Heart left ventricle (tissue), 16 donors: ENCODE measurements at regions of chr6 and their contacts with region 1.

Region 1: DNA sequence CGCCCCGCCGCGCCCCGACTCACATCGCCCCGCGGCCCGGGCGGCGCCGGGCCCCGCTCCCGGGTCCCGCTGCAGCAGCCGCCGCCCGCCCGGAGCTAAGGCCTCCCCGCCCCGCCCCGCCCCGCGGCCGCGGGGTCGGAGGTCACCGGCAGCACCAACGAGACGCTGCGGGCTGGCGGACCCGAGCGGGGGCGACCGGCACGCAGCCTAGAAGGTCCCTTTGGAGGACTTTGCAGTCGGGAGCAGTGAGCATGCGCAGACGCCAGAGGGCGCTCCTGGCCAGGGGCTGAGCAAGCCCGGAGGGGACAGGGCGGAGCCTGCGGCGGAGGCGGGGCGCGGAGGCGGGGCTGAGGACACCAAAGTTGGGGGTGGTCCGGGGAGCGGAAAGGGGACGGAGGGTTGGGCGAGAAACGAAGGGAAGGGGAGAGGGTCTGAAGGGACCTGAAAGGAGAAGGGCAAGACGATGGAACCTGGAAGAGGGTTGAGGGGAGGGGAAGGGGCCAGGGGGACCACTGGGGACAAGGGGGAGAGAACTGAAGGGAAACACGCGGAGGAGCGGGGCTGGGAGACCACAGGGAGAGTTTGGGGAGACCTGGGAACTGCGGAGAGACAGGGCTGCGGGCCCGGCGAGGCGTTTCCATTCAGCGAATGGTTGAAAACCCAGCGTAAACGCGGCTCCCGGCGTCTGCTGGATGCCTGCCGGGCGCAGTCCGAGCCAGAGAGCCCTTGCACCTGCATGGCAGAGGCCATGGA is at the start of gene FRS3:
- DNase-seq: peak; percentile 98 to 100 (median 99)
- ATAC-seq: peak; percentile 92 to 95 (median 94)
- H3K4me3 ChIP-seq: peak within 1 kb of the TSS; percentile 61 to 96 (median 79)
- H3K27ac ChIP-seq: peak within 1 kb of the TSS; percentile 76 to 97 (median 91)
- H3K4me1 ChIP-seq: peaks cover 3 to 56% (median 26%) of the 10 kb centered on the region in 12 donors
- H3K27me3 ChIP-seq: no peaks in the 10 kb centered on the region
- CTCF ChIP-seq: peak; percentile 84 to 97 (median 91)
- POLR2A ChIP-seq: peak in 1 of 2 donors; percentile 36
- total RNA-seq, gene FRS3: 3.8 to 6.8 (median 5.1) TPM

Region 2: DNA sequence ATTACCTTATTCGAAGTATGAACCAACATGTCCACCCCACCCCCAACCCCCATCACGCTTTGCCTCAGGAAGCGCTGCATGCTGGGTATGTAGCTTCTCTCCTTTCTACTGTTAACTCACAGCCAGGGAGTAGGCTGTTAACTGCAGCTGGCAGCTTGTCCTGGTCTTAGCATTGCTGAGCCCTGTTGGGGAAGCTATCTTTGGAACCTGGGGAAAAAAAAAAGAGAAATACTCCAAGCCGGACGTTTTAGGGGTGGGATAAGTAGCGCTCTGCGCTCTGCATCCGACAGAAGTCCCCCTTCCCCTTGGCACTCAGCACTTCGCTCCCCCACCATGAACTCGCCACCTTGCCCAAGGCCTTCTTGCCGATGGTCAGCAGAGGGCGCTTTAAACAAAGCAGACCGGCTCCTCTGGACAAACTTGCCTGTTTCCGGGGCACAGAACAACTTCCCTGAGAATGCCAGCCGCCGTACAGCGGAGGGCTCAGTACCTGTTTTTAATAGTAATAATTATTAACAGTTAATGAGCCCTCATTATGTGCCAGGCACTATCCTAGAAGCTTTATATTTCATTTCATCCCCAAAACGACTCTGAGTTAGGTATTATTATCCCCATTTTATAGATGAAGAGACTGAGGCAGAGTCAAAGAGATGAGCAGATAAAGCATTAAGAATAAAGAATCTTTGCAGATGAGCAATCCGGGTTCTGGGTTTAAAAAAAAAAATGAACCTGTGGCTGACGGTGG is 176.9 kb before region 1 on chr6:
- intact Hi-C with region 1: loop called in 7 of 10 experiments (anchors 2 to 10 kb)
- DNase-seq: peak; percentile 84 to 88 (median 84)
- ATAC-seq: peak; percentile 62 to 87 (median 81)
- H3K4me3 ChIP-seq: peak overlapping the region in 9 of 12 donors; percentile 2 to 40 (median 17)
- H3K27ac ChIP-seq: peak overlapping the region in 3 of 12 donors; percentile 5 to 52 (median 51)
- H3K4me1 ChIP-seq: peaks cover 0 to 11% (median 3%) of the 10 kb centered on the region in 12 donors
- H3K27me3 ChIP-seq: no peaks in the 10 kb centered on the region
- CTCF ChIP-seq: peak; percentile 77 to 96 (median 90)
- POLR2A ChIP-seq: no peak

Region 3: DNA sequence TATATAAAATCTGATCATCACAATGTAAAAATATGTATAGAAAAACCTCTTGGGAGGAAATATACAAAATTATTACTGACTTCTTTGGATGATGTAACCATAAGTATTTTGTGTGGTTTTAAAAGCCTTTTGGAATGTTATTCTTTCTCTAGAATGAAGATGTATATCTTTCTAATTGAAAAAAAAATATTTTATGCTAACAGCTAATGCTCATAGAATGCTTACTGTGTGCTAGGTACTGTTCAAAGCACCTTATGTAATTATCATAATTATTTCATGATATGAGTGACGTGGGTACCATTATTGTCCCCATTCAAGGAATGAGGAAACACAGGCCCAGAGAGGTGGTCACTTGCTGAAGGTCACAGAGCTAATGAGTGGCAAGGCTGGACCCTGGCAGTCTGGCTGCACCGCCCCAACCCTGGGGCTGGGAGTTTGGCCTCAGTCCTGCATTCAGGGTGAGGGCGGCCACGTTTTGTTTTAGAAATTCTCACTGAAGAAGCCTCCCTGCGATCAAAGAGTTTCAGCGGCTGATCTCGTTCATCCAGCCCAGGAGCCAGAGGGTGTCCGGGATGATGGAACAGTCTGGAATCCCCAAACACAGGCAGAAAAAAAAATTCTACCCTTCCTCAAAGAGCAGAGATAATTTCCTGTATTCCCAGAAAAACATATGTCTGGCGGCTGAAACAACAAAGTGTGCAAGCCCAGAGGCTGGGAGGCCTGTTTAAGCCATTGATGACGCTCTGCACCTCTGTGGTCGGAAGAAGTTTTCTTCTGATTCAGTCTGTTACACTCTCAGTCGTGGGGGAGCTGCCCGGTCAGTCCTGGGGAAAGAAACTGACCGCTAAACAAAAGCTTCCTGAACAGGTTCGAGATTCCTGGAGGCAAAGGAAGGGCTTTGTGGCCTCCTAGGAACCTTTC is 81.8 kb before region 1 on chr6:
- intact Hi-C with region 1: loop called in 4 of 10 experiments (anchors 5 to 10 kb)
- DNase-seq: peak in 2 of 5 donors; percentile 52 to 53
- ATAC-seq: peak; percentile 5 to 75 (median 24)
- H3K4me3 ChIP-seq: peak overlapping the region in 1 of 12 donors; percentile 9
- H3K27ac ChIP-seq: peak overlapping the region in 11 of 12 donors; percentile 32 to 90 (median 72)
- H3K4me1 ChIP-seq: peaks cover 3 to 70% (median 45%) of the 10 kb centered on the region in 12 donors
- H3K27me3 ChIP-seq: no peaks in the 10 kb centered on the region
- CTCF ChIP-seq: no peak
- POLR2A ChIP-seq: no peak

Region 4: DNA sequence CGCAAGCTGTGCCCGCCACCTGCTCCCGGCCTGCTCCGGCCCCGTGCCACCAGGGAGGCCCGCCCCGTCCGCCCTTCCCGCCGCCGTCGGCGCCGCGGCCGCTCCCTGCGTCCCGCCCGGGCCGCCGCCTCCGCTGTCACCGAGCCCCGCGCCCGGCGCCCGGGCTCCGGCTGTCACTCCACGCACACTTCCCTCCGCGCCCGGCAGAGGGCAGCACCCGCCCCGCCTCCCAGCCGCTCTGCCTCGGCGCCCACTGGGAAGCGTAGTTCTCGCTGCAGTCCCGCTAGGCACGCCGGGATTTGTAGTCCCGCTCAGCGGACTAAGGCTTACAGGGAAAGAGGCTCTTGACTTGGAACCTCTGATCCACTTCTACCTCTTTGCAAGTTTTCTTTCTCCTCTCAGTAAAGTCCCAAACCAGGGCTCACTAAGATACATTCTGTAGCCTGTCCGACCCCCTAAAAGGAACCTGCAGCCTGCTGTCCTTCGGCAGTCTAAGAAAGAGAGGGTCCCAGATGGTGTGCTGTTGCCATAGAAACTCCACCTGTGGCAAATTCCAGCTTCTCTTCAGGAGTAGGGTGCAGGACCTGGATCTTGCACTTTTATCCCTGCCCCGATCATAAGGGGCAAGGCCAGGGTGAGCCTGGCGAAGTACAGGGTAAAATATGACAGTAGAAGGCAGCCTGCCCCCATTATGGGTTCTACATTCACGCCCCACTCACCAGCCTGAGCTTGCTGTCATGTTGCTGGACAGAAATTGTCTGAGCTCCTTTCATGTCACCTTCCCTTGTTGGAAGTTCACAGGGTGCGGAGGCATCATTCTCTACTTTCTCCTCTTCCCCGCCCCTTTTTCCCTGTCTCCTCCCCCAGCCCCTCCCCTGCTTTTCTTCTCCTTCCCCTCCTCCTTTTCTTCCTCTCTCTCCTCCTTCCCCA is 44.3 kb before region 1 on chr6 and contains the start of gene TFEB:
- intact Hi-C with region 1: loop called in 8 of 10 experiments (anchors 1 to 5 kb)
- DNase-seq: peak; percentile 95 to 97 (median 96)
- ATAC-seq: peak; percentile 47 to 76 (median 68)
- H3K4me3 ChIP-seq: peak within 1 kb of the TSS; percentile 75 to 100 (median 96)
- H3K27ac ChIP-seq: peak within 1 kb of the TSS; percentile 98 to 100 (median 98)
- H3K4me1 ChIP-seq: peaks cover 10 to 40% (median 32%) of the 10 kb centered on the region in 12 donors
- H3K27me3 ChIP-seq: no peaks in the 10 kb centered on the region
- CTCF ChIP-seq: peak; percentile 82 to 100 (median 95)
- POLR2A ChIP-seq: peak; percentile 28 to 52
- total RNA-seq, gene TFEB: 26.2 to 47.2 (median 41.1) TPM

Region 5: GRCh38 chr6:41941280-41942066 is 161.5 kb after region 1 on chr6 and contains the start of gene CCND3:
- intact Hi-C with region 1: loop called in 8 of 10 experiments (anchors 5 kb)
- DNase-seq: peak; percentile 94 to 97 (median 95)
- ATAC-seq: peak; percentile 84 to 95 (median 94)
- H3K4me3 ChIP-seq: peak within 1 kb of the TSS; percentile 63 to 99 (median 88)
- H3K27ac ChIP-seq: peak within 1 kb of the TSS; percentile 54 to 95 (median 86)
- H3K4me1 ChIP-seq: peaks cover 7 to 63% (median 46%) of the 10 kb centered on the region in 12 donors
- H3K27me3 ChIP-seq: no peaks in the 10 kb centered on the region
- CTCF ChIP-seq: peak in 2 of 12 donors; percentile 2 to 11
- POLR2A ChIP-seq: peak in 1 of 2 donors; percentile 70
- total RNA-seq, gene CCND3: 33.9 to 116 (median 46.2) TPM

Region 6: GRCh38 chr6:42166444-42167141 is 386.6 kb after region 1 on chr6:
- intact Hi-C with region 1: loop called in 3 of 10 experiments (anchors 2 to 10 kb)
- DNase-seq: peak in 4 of 5 donors; percentile 41 to 60 (median 57)
- ATAC-seq: peak in 3 of 4 donors; percentile 73 to 82 (median 74)
- H3K4me3 ChIP-seq: no peak overlapping the region
- H3K27ac ChIP-seq: no peak overlapping the region
- H3K4me1 ChIP-seq: peaks cover 0 to 4% (median 0%) of the 10 kb centered on the region in 12 donors
- H3K27me3 ChIP-seq: no peaks in the 10 kb centered on the region
- CTCF ChIP-seq: peak; percentile 88 to 95 (median 92)
- POLR2A ChIP-seq: no peak